ENCODE measurements at regions of chr18 and their contacts with region 1.

Region 1: GRCh38 chr18:2540575-2540974 is 30.7 kb downstream of the METTL4 start:
- DNase-seq: no peak
- H3K4me3 ChIP-seq: no peak overlapping the region
- H3K4me3 Mint-ChIP-seq: no peak overlapping the region
- H3K27ac Mint-ChIP-seq: no peak overlapping the region
- H3K4me1 ChIP-seq: no peaks in the 10 kb centered on the region
- H3K4me1 Mint-ChIP-seq: no peaks in the 10 kb centered on the region
- H3K27me3 ChIP-seq: no peaks in the 10 kb centered on the region
- H3K27me3 Mint-ChIP-seq: no peaks in the 10 kb centered on the region
- CTCF ChIP-seq: no peak

Region 2: GRCh38 chr18:1751243-1751642 is 789.3 kb before region 1 on chr18:
- CTCF ChIA-PET with region 1: no interaction called
- POLR2A ChIA-PET with region 1: no interaction called
- intact Hi-C with region 1: loop called (anchors 5 kb)
- DNase-seq: no peak
- H3K4me3 ChIP-seq: no peak overlapping the region
- H3K4me3 Mint-ChIP-seq: no peak overlapping the region
- H3K27ac Mint-ChIP-seq: no peak overlapping the region
- H3K4me1 ChIP-seq: no peaks in the 10 kb centered on the region
- H3K4me1 Mint-ChIP-seq: no peaks in the 10 kb centered on the region
- H3K27me3 ChIP-seq: no peaks in the 10 kb centered on the region
- H3K27me3 Mint-ChIP-seq: peaks cover 5% of the 10 kb centered on the region
- CTCF ChIP-seq: peak in 1 of 2 experiments; percentile 10

Measured in Caco-2 (cell line).